CD8-positive, alpha-beta T cell (primary cell): ENCODE measurements at regions of chr7 and their contacts with region 1.

Region 1: DNA sequence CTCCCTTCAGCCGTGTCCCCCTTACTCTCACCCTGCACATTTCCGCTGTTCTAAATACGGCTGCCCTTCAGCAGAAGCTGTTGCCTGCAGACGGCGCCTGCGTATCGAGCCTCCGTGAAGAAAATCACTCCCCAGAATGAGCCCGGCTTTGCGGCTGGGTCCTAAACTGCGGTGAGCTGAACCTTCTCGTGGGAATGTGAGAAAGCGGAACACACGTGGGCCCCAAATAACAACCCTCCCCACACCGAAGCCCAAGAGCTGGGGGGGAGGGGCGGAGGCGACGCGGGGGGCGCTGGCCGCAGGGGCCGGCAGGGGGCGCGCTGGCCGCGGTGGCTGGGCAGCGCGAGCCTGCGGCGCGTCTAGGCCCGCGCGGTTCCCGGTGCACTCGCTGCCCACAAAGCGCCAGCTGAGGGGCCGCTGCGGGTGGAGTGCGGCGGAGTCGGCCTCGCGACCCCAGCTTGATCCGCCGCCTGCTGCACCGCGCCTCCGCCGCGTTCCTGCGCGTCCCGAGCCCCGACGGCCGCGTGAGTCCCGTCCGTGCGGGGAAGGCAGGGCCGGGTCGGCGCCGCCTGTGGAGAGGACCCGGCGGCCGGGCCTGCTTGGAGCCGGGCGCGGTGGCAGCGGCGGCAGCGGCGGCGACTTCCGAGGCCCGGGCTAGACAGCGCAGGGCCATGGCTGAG is at the start of gene ZNF398:
- DNase-seq: peak; percentile 69 to 92 (median 79)
- ATAC-seq: peak; percentile 78
- H3K4me3 ChIP-seq: peak within 1 kb of the TSS; percentile 66 to 100
- H3K4me3 Mint-ChIP-seq: peak within 1 kb of the TSS; percentile 89
- H3K27ac ChIP-seq: peak within 1 kb of the TSS; percentile 70 to 77
- H3K27ac Mint-ChIP-seq: peak within 1 kb of the TSS; percentile 91
- H3K4me1 ChIP-seq: peaks cover 22% of the 10 kb centered on the region
- H3K4me1 Mint-ChIP-seq: peaks cover 35% of the 10 kb centered on the region
- H3K27me3 ChIP-seq: no peaks in the 10 kb centered on the region
- H3K27me3 Mint-ChIP-seq: no peaks in the 10 kb centered on the region
- CTCF ChIP-seq: peak; percentile 55
- total RNA-seq, gene ZNF398: 12.9 to 15.1 TPM

Region 2: GRCh38 chr7:147915781-147916180 is 1231.4 kb before region 1 on chr7:
- CTCF ChIA-PET with region 1: no interaction called
- POLR2A ChIA-PET with region 1: no interaction called
- intact Hi-C with region 1: no loop called
- DNase-seq: no peak
- ATAC-seq: no peak
- H3K4me3 ChIP-seq: no peak overlapping the region
- H3K4me3 Mint-ChIP-seq: no peak overlapping the region
- H3K27ac ChIP-seq: no peak overlapping the region
- H3K27ac Mint-ChIP-seq: no peak overlapping the region
- H3K4me1 ChIP-seq: no peaks in the 10 kb centered on the region
- H3K4me1 Mint-ChIP-seq: no peaks in the 10 kb centered on the region
- H3K27me3 ChIP-seq: no peaks in the 10 kb centered on the region
- H3K27me3 Mint-ChIP-seq: no peaks in the 10 kb centered on the region
- CTCF ChIP-seq: no peak

Region 3: DNA sequence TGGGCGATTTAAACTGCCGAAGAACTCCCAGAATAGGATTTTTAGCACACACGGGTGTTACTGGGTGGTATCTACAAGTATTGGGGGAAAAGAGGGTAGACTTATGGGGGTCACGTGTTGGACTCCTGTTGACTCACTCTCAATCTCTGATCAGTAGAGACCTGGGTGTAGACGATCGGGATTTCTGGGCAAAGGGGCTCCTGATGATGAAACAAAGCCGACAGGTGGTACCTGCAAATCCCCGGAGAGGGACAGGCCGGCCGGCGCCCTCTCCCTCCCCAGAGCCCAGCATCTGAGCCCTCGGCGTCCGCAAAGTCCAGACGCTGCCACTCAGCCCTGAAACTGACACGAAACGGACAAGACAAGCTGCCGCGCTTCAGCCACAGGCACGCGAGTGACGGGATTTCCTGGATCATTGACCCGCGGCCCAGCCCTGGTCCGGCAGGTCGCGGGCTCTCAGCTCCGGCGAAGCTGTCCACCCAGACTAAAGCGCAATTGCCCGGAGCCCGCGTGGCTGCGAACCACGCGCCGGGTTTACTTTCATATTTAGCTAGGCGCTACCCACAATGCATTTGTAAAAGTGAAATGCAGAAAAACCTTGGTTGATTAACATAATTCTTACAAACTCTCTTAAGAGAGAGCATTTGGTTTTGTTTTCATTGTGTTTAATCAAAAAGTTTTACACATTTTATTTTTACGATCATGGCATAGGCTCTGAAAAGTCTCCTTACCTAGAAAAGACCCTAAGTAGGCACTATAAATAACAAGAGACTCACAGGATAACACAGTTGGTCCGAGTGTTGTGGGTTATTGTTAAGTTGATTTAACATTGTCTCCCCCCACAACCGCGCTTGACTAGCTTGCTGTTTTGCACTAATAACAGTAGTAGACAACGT is 206.3 kb before region 1 on chr7:
- CTCF ChIA-PET with region 1: no interaction called
- POLR2A ChIA-PET with region 1: no interaction called
- intact Hi-C with region 1: loop called in 1 of 2 experiments (anchors 1 kb)
- DNase-seq: peak; percentile 31 to 87 (median 66)
- ATAC-seq: peak; percentile 65
- H3K4me3 ChIP-seq: peak overlapping the region; percentile 90 to 96
- H3K4me3 Mint-ChIP-seq: peak overlapping the region; percentile 98
- H3K27ac ChIP-seq: peak overlapping the region; percentile 89 to 91
- H3K27ac Mint-ChIP-seq: peak overlapping the region; percentile 98
- H3K4me1 ChIP-seq: peaks cover 9% of the 10 kb centered on the region
- H3K4me1 Mint-ChIP-seq: peaks cover 17% of the 10 kb centered on the region
- H3K27me3 ChIP-seq: no peaks in the 10 kb centered on the region
- H3K27me3 Mint-ChIP-seq: no peaks in the 10 kb centered on the region
- CTCF ChIP-seq: no peak

Region 4: GRCh38 chr7:149090397-149091195 is 56.6 kb before region 1 on chr7 and contains the start of gene ZNF786:
- CTCF ChIA-PET with region 1: interaction called, 3 read pairs
- POLR2A ChIA-PET with region 1: interaction called, 4 read pairs
- intact Hi-C with region 1: loop called (anchors 1 kb)
- DNase-seq: peak; percentile 86 to 97 (median 93)
- ATAC-seq: peak; percentile 85
- H3K4me3 ChIP-seq: peak within 1 kb of the TSS; percentile 83 to 98
- H3K4me3 Mint-ChIP-seq: peak within 1 kb of the TSS; percentile 99
- H3K27ac ChIP-seq: peak within 1 kb of the TSS; percentile 90 to 95
- H3K27ac Mint-ChIP-seq: peak within 1 kb of the TSS; percentile 100
- H3K4me1 ChIP-seq: peaks cover 31% of the 10 kb centered on the region
- H3K4me1 Mint-ChIP-seq: peaks cover 27% of the 10 kb centered on the region
- H3K27me3 ChIP-seq: no peaks in the 10 kb centered on the region
- H3K27me3 Mint-ChIP-seq: no peaks in the 10 kb centered on the region
- CTCF ChIP-seq: peak; percentile 90
- total RNA-seq, gene ZNF786: 4.7 to 5.7 TPM

Region 5: DNA sequence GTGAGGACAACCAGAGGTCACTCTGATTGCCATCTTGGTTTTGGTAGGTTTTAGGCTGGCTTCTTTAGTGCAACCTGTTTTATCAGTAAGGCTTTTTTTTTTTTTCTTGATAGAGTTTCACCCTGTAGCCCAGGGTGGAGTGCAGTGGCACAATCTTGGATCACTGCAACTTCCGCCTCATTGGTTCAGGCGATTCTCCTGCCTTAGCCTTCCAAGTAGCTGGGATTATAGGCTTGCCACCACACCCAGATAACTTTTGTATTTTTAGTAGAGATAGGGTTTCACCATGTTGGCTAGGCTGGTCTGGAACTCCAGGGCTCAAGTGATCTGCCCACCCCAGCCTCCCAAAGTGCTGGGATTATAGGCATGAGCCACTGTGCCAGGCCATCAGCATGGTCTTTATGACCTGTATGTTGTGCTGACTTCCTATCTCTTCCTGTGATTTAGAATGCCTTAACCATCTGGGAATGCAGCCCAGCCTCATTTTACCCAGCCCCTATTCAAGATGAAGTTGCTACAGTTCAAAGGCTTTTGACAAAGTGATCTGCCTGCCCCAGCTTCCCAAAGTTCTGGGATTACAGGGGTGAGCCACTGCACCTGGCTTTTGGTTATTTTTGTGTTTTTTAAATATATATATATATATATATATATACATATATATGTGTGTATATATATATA is 14.0 kb before region 1 on chr7:
- CTCF ChIA-PET with region 1: interaction called, 14 read pairs
- POLR2A ChIA-PET with region 1: interaction called, 12 read pairs
- intact Hi-C with region 1: no loop called
- DNase-seq: no peak
- ATAC-seq: no peak
- H3K4me3 ChIP-seq: no peak overlapping the region
- H3K4me3 Mint-ChIP-seq: no peak overlapping the region
- H3K27ac ChIP-seq: no peak overlapping the region
- H3K27ac Mint-ChIP-seq: no peak overlapping the region
- H3K4me1 ChIP-seq: peaks cover 3% of the 10 kb centered on the region
- H3K4me1 Mint-ChIP-seq: peaks cover 3% of the 10 kb centered on the region
- H3K27me3 ChIP-seq: no peaks in the 10 kb centered on the region
- H3K27me3 Mint-ChIP-seq: no peaks in the 10 kb centered on the region
- CTCF ChIP-seq: no peak

Region 6: GRCh38 chr7:149229526-149229925 is 82.3 kb after region 1 on chr7:
- CTCF ChIA-PET with region 1: no interaction called
- POLR2A ChIA-PET with region 1: no interaction called
- intact Hi-C with region 1: no loop called
- DNase-seq: no peak
- ATAC-seq: no peak
- H3K4me3 ChIP-seq: no peak overlapping the region
- H3K4me3 Mint-ChIP-seq: no peak overlapping the region
- H3K27ac ChIP-seq: no peak overlapping the region
- H3K27ac Mint-ChIP-seq: no peak overlapping the region
- H3K4me1 ChIP-seq: no peaks in the 10 kb centered on the region
- H3K4me1 Mint-ChIP-seq: no peaks in the 10 kb centered on the region
- H3K27me3 ChIP-seq: peaks cover 0 to 3% of the 10 kb centered on the region in 2 experiments
- H3K27me3 Mint-ChIP-seq: peaks cover 4% of the 10 kb centered on the region
- CTCF ChIP-seq: no peak

Region 7: GRCh38 chr7:149261829-149262617 is 114.8 kb after region 1 on chr7 and contains the start of gene ZNF783:
- CTCF ChIA-PET with region 1: interaction called, 6 read pairs
- POLR2A ChIA-PET with region 1: interaction called, 14 read pairs
- intact Hi-C with region 1: no loop called
- DNase-seq: peak; percentile 68 to 96 (median 83)
- ATAC-seq: peak; percentile 93
- H3K4me3 ChIP-seq: peak within 1 kb of the TSS; percentile 69
- H3K4me3 Mint-ChIP-seq: peak within 1 kb of the TSS; percentile 86
- H3K27ac ChIP-seq: peak within 1 kb of the TSS; percentile 50 to 83
- H3K27ac Mint-ChIP-seq: peak within 1 kb of the TSS; percentile 94
- H3K4me1 ChIP-seq: peaks cover 30% of the 10 kb centered on the region
- H3K4me1 Mint-ChIP-seq: peaks cover 37% of the 10 kb centered on the region
- H3K27me3 ChIP-seq: no peaks in the 10 kb centered on the region
- H3K27me3 Mint-ChIP-seq: no peaks in the 10 kb centered on the region
- CTCF ChIP-seq: peak; percentile 87
- total RNA-seq, gene ZNF783: 24.0 to 27.3 TPM

Region 8: GRCh38 chr7:149430192-149430591 is 283.0 kb after region 1 on chr7:
- CTCF ChIA-PET with region 1: no interaction called
- POLR2A ChIA-PET with region 1: no interaction called
- intact Hi-C with region 1: no loop called
- DNase-seq: no peak
- ATAC-seq: no peak
- H3K4me3 ChIP-seq: no peak overlapping the region
- H3K4me3 Mint-ChIP-seq: no peak overlapping the region
- H3K27ac ChIP-seq: no peak overlapping the region
- H3K27ac Mint-ChIP-seq: no peak overlapping the region
- H3K4me1 ChIP-seq: no peaks in the 10 kb centered on the region
- H3K4me1 Mint-ChIP-seq: no peaks in the 10 kb centered on the region
- H3K27me3 ChIP-seq: no peaks in the 10 kb centered on the region
- H3K27me3 Mint-ChIP-seq: no peaks in the 10 kb centered on the region
- CTCF ChIP-seq: no peak

Region 9: DNA sequence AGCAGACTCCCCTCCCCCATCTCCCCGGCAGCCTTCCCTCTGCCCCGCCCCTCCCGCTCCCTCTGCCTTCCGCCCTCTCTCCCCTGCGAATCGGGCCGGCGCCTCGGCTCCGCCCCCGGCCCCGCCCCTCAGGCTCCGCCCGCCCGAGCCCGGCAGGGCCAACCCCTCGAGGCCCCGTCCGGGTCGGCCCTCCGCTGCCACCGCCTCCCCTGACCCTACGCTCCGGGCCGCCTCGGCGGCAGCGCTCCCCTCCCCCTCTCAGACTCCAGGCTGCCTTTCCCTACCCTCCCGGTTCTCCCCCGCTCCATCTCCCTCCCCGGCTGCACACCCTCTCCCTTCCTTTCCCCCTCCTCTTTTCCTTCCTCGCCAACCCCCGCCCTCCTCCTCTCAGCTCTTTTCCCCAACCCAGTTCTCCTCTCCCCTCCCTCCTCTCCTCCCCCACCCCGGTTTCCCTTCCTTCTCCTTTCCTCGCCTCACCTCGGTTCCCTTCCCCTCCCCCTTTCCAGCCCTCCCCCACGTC is 624.6 kb after region 1 on chr7:
- CTCF ChIA-PET with region 1: no interaction called
- POLR2A ChIA-PET with region 1: no interaction called
- intact Hi-C with region 1: loop called in 1 of 2 experiments (anchors 10 kb)
- DNase-seq: peak; percentile 70 to 91 (median 84)
- ATAC-seq: peak; percentile 88
- H3K4me3 ChIP-seq: peak overlapping the region; percentile 63 to 66
- H3K4me3 Mint-ChIP-seq: peak overlapping the region; percentile 71
- H3K27ac ChIP-seq: no peak overlapping the region
- H3K27ac Mint-ChIP-seq: no peak overlapping the region
- H3K4me1 ChIP-seq: peaks cover 12% of the 10 kb centered on the region
- H3K4me1 Mint-ChIP-seq: peaks cover 6% of the 10 kb centered on the region
- H3K27me3 ChIP-seq: no peaks in the 10 kb centered on the region
- H3K27me3 Mint-ChIP-seq: no peaks in the 10 kb centered on the region
- CTCF ChIP-seq: no peak